Activated CD4-positive, alpha-beta memory T cell treated with anti-CD3 and anti-CD28 coated beads for 36 hours (primary cell): ENCODE measurements at regions of chr7 and their contacts with region 1.

Region 1: GRCh38 chr7:106346678-106347217 is 62.0 kb upstream of the NAMPT start:
- DNase-seq: peak; percentile 61
- H3K4me3 Mint-ChIP-seq: peak overlapping the region; percentile 59
- H3K27ac Mint-ChIP-seq: peak overlapping the region; percentile 99
- H3K4me1 Mint-ChIP-seq: peaks cover 60% of the 10 kb centered on the region
- H3K27me3 Mint-ChIP-seq: peaks cover 4% of the 10 kb centered on the region

Region 2: DNA sequence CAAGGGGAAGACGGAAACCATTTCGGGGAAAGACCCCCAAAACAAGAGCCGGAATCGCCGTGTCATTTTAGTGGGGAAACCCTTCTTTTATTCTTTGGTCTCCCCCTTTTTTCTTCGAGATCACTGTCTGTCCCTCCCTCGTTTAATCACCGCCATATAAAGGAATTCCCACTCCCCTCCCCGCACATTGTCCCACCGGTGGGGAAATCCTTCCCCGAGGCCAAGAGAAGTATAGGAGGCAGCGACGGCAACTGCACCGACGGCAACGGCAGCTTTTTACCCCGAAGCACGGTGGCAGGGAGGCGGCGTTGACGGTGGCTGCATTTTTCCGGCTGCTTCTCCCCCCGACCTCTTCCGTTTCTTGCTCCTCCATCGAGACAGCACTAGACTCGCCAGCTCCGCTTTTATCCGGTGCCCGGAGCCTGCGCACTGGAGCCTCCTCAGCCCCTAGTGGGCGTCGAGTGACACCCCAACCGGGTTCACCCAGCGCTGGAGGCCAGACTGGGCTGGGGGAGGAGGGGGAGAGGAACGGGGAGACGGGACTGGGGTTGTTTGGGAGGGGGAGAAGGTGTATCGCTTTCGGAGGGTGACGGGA is 1333.4 kb before region 1 on chr7:
- CTCF ChIA-PET with region 1: no interaction called
- POLR2A ChIA-PET with region 1: no interaction called
- intact Hi-C with region 1: loop called (anchors 5 kb)
- DNase-seq: peak; percentile 96
- H3K4me3 Mint-ChIP-seq: peak overlapping the region; percentile 99
- H3K27ac Mint-ChIP-seq: peak overlapping the region; percentile 100
- H3K4me1 Mint-ChIP-seq: peaks cover 20% of the 10 kb centered on the region
- H3K27me3 Mint-ChIP-seq: no peaks in the 10 kb centered on the region

Region 3: DNA sequence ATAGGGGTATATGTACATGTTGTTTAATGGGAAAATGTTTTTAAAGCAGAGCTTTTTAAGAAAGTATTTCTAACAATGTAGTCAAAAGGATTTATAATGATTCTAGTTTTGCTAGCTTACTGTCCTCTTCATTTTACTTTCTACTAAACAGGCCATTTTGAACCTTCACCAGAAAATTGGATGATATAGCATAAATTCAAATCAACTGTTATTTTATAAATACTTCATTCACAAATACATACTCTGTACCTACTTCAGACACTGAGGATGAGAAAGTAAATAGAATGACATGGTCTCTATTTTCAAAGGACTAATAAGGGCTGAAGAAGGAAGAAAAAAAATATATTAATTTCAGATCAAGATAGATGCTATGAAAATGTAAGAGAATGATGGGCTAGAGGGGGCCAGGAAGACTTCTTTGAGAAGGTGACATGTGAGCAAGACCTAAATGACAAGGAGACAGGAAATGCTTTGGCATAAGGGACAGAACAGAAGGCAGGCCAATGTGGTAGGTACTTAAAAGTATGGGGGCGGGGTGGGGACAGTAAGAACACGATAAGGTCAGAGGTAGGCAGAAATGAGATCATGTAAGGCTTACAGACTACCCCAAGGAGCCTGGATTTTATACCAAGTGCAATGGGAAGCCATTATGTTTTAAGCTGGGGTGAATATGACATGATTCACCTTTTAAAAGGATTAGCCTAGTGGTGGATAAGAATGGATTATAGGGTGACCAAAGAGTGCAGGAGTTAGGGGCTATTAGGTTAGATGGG is 67.1 kb before region 1 on chr7:
- CTCF ChIA-PET with region 1: interaction called, 7 read pairs
- POLR2A ChIA-PET with region 1: interaction called, 143 read pairs
- intact Hi-C with region 1: loop called (anchors 1 kb)
- DNase-seq: peak; percentile 73
- H3K4me3 Mint-ChIP-seq: peak overlapping the region; percentile 90
- H3K27ac Mint-ChIP-seq: peak overlapping the region; percentile 98
- H3K4me1 Mint-ChIP-seq: peaks cover 54% of the 10 kb centered on the region
- H3K27me3 Mint-ChIP-seq: no peaks in the 10 kb centered on the region

Region 4: GRCh38 chr7:106329971-106330733 is 16.6 kb before region 1 on chr7:
- CTCF ChIA-PET with region 1: interaction called, 3 read pairs
- POLR2A ChIA-PET with region 1: interaction called, 3 read pairs
- intact Hi-C with region 1: loop called (anchors 2 kb)
- DNase-seq: peak; percentile 31
- H3K4me3 Mint-ChIP-seq: no peak overlapping the region
- H3K27ac Mint-ChIP-seq: peak overlapping the region; percentile 57
- H3K4me1 Mint-ChIP-seq: peaks cover 25% of the 10 kb centered on the region
- H3K27me3 Mint-ChIP-seq: peaks cover 10% of the 10 kb centered on the region

Region 5: DNA sequence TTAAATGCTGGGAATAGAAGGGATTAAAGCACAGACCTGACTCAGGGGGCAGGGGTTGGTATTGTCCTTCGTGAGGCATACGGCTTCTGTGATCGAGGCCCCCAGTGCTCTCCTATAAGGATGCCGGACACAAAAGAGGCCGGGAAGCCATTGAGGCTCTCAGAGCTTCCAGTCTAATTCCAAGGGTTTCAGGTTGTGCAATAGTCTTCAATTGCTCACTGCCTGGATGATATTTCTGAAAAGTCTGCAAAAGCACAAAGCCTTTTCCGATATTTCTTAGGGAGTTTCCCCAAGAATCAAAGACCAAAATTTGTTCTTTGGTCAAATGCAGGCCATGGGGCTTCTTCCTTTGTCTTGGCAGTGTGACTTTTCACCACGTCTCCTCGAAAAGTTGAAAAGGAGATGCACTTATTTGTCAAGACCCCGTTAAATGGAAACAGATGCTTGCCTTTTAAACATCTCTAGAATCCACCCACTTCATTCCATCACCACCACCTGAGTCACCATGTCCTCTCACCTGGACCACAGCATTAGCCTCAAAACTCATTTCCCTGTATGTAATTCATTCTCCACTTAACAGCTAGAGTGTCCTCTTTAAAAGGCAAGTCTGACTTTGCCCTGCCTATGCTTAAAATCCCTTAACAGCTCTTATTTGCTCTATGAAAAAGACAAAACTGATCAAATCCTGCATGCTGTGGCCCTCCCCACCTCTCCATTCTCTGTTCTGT is 72.9 kb after region 1 on chr7:
- CTCF ChIA-PET with region 1: interaction called, 13 read pairs
- POLR2A ChIA-PET with region 1: interaction called, 31 read pairs
- intact Hi-C with region 1: loop called (anchors 1 kb)
- DNase-seq: peak; percentile 75
- H3K4me3 Mint-ChIP-seq: no peak overlapping the region
- H3K27ac Mint-ChIP-seq: peak overlapping the region; percentile 76
- H3K4me1 Mint-ChIP-seq: peaks cover 76% of the 10 kb centered on the region
- H3K27me3 Mint-ChIP-seq: peaks cover 1% of the 10 kb centered on the region

Region 6: GRCh38 chr7:106485031-106485551 is 138.3 kb after region 1 on chr7:
- CTCF ChIA-PET with region 1: no interaction called
- POLR2A ChIA-PET with region 1: interaction called, 9 read pairs
- intact Hi-C with region 1: loop called (anchors 1 kb)
- DNase-seq: peak; percentile 22
- H3K4me3 Mint-ChIP-seq: no peak overlapping the region
- H3K27ac Mint-ChIP-seq: peak overlapping the region; percentile 78
- H3K4me1 Mint-ChIP-seq: peaks cover 58% of the 10 kb centered on the region
- H3K27me3 Mint-ChIP-seq: peaks cover 18% of the 10 kb centered on the region

Region 7: GRCh38 chr7:106583101-106583500 is 236.4 kb after region 1 on chr7:
- CTCF ChIA-PET with region 1: no interaction called
- POLR2A ChIA-PET with region 1: no interaction called
- intact Hi-C with region 1: no loop called
- DNase-seq: no peak
- H3K4me3 Mint-ChIP-seq: no peak overlapping the region
- H3K27ac Mint-ChIP-seq: no peak overlapping the region
- H3K4me1 Mint-ChIP-seq: no peaks in the 10 kb centered on the region
- H3K27me3 Mint-ChIP-seq: peaks cover 9% of the 10 kb centered on the region

Region 8: DNA sequence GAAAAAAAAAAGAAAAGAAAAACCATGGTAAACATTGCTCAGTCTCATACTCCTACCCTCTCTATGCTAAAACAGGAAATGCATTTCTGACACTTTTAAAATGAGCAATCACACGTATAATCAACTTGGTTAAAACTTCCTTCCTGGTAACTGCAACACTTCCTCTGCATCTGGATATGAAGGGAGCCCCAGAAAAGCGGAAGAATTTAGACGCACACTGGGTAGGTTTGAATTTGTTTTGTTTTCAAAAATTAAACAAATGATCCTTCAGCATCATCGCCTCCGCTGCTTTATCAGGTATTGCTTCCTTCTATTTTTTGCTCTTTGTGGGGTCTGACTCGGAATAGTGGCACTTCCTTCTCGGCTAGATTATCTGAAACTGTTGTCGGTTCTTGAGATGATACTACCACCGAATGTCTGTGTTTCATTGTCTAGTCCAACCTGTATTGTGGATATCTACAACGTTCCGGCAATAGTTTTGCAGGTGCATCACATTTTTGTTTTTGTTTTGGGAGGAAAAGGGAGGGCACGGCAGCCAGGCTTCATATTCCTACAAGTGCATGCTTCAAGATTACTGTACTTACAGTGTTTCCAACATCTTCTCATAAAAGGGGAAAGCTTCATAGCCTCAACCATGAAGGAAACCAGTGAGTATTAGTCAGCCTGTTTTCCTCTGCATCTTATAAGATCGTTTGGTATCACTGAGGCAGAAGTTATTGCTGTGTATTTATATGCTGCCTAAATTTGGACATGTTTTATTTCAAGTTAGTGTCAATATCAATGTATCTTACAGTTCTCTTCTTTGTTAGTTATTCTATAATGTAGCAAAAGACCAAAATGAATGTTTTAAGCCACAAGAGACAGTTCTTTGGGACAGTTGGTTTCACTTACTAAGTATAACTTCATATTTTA is 518.6 kb after region 1 on chr7 and contains the start of gene PIK3CG:
- CTCF ChIA-PET with region 1: no interaction called
- POLR2A ChIA-PET with region 1: no interaction called
- intact Hi-C with region 1: loop called (anchors 5 kb)
- DNase-seq: no peak
- H3K4me3 Mint-ChIP-seq: peak within 1 kb of the TSS; percentile 83
- H3K27ac Mint-ChIP-seq: peak within 1 kb of the TSS; percentile 79
- H3K4me1 Mint-ChIP-seq: peaks cover 73% of the 10 kb centered on the region
- H3K27me3 Mint-ChIP-seq: no peaks in the 10 kb centered on the region
- total RNA-seq, gene PIK3CG: 10.9 to 11.3 TPM